AG04450 (cell line): ENCODE measurements at regions of chr15 and their contacts with region 1.

Region 1: GRCh38 chr15:77831986-77832385 is 199.3 kb upstream of the LINGO1 start:
- DNase-seq: no peak
- H3K4me3 ChIP-seq: no peak overlapping the region
- H3K27ac ChIP-seq: no peak overlapping the region
- H3K27me3 ChIP-seq: peaks cover 30% of the 10 kb centered on the region
- CTCF ChIP-seq: no peak

Region 2: GRCh38 chr15:77821188-77821958 is 10.6 kb before region 1 on chr15:
- CTCF ChIA-PET with region 1: interaction called, 10 read pairs
- POLR2A ChIA-PET with region 1: no interaction called
- DNase-seq: peak; percentile 18
- H3K4me3 ChIP-seq: no peak overlapping the region
- H3K27ac ChIP-seq: no peak overlapping the region
- H3K27me3 ChIP-seq: peaks cover 52% of the 10 kb centered on the region
- CTCF ChIP-seq: peak; percentile 86